ENCODE measurements at regions of chr15 and their contacts with region 1.

Region 1: GRCh38 chr15:90931737-90932659 is at the start of gene HDDC3:
- DNase-seq: peak; percentile 95
- ATAC-seq: peak; percentile 56
- H3K4me3 Mint-ChIP-seq: peak within 1 kb of the TSS; percentile 96
- H3K27ac Mint-ChIP-seq: peak within 1 kb of the TSS; percentile 97
- H3K4me1 Mint-ChIP-seq: peaks cover 53% of the 10 kb centered on the region
- H3K27me3 Mint-ChIP-seq: no peaks in the 10 kb centered on the region
- CTCF ChIP-seq: peak; percentile 85
- total RNA-seq, gene HDDC3: 17.6 and 19.0 TPM in 2 replicates

Region 2: GRCh38 chr15:90101969-90102890 is 829.8 kb before region 1 on chr15 and contains the start of gene IDH2:
- CTCF ChIA-PET with region 1: no interaction called
- POLR2A ChIA-PET with region 1: no interaction called
- intact Hi-C with region 1: loop called (anchors 5 kb)
- DNase-seq: peak; percentile 78
- ATAC-seq: peak; percentile 88
- H3K4me3 Mint-ChIP-seq: peak within 1 kb of the TSS; percentile 89
- H3K27ac Mint-ChIP-seq: peak within 1 kb of the TSS; percentile 83
- H3K4me1 Mint-ChIP-seq: peaks cover 50% of the 10 kb centered on the region
- H3K27me3 Mint-ChIP-seq: peaks cover 9% of the 10 kb centered on the region
- CTCF ChIP-seq: no peak
- total RNA-seq, gene IDH2: 49.1 and 51.2 TPM in 2 replicates

Region 3: DNA sequence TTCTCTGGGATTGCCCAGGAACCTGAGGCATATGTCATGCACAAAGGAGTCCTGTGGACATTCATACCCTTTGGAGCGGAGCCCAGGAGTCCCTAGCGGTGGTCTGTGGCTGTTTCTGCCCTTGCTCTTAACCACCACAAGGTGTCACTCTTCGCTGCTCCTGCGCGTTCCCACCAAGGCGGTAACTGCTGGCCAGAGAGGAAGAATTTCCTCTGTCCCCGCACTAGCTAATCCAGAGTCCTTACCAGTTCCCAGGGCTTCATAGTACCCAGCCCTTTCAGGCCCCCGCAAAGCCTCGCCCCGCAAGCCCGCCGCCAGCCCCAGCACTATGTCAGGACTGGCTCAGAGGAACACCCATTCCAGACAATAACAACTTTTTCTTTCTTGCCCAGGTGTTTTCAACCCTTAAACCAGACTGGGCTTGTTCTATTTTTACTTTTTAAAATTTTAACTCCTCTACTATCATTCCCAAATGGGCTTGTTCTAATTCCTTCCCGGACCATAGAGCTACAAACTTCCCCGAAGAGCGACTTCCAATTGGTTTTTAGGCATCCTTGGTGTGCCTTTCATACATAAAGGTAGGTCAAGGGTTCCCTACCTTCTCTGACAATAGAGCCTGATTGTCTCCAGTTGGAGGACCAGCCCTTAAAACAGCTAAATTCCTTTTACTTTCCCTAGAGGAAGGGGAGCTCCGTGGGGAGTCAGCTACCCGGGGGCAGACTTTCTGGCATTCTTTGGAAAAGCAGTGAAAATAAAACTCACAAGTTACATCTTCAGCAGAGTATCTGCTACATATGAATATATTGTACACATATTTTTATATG is 611.7 kb before region 1 on chr15:
- CTCF ChIA-PET with region 1: interaction called, 5 read pairs
- POLR2A ChIA-PET with region 1: no interaction called
- intact Hi-C with region 1: loop called (anchors 2 kb)
- DNase-seq: peak; percentile 42
- ATAC-seq: peak; percentile 100
- H3K4me3 Mint-ChIP-seq: peak overlapping the region; percentile 5
- H3K27ac Mint-ChIP-seq: no peak overlapping the region
- H3K4me1 Mint-ChIP-seq: peaks cover 2% of the 10 kb centered on the region
- H3K27me3 Mint-ChIP-seq: no peaks in the 10 kb centered on the region
- CTCF ChIP-seq: no peak

Region 4: DNA sequence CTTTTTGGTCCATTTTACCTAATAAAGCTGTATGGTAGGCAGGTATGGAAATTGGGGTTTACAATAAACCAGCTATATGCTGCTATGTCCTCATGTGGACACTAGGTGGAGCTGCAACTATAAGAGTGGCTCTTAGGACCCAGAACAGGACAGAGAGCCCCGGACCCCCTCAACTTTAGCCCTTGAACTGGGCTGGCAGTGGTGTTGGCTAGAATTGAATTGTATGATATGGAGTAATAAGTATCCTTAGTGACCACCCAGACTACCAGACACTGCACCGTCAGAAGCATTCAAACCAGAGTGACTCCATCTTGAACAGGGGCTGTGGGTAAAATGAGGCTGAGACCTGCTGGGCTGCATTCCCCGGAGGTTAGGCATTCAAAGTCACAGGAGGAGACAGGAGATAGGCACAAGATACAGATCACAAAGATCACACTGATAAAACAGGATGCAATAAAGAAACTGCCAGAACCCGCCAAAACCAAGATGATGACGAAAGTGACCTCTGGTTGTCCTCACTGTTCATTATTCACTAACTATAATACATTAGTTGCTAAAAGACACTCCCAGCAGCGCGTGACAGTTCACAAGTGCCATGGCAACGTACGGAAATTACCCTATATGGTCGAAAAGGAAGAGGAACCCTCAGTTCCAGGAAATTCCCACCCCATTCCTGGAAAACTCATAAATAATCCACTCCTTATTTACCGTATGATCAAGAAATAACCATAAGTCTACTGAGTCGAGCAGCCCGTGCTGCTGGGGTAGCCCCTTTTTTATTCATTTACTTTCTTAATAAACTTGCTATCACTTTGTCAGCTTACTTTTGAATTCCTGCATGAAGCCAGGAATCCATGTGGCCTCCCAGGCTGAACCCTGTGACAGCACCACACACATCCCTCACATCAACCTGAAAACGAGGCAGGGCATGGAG is 283.6 kb before region 1 on chr15:
- CTCF ChIA-PET with region 1: interaction called, 17 read pairs
- POLR2A ChIA-PET with region 1: interaction called, 6 read pairs
- intact Hi-C with region 1: loop called (anchors 1 kb)
- DNase-seq: no peak
- ATAC-seq: peak; percentile 93
- H3K4me3 Mint-ChIP-seq: peak overlapping the region; percentile 39
- H3K27ac Mint-ChIP-seq: peak overlapping the region; percentile 43
- H3K4me1 Mint-ChIP-seq: peaks cover 7% of the 10 kb centered on the region
- H3K27me3 Mint-ChIP-seq: peaks cover 4% of the 10 kb centered on the region
- CTCF ChIP-seq: no peak

Region 5: DNA sequence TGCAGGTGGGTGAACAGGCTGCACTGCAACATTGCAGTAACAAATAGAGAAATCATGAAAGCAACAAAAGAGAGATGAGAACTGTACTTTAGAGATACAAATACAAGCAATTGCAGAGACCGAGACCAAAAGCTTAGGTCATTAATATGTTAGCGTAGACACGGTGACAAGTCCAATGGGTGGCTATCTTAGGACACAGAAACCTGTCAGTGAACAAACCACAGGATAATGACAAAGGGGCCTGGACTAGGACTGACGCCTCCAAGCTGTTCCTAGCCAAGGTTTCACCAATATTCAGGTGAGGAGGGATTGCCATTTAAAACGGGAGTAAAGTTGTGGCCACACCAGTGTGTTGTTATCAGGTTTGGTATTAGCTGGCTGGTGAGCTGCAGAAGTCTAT is 256.5 kb before region 1 on chr15:
- CTCF ChIA-PET with region 1: no interaction called
- POLR2A ChIA-PET with region 1: no interaction called
- intact Hi-C with region 1: no loop called
- DNase-seq: no peak
- ATAC-seq: no peak
- H3K4me3 Mint-ChIP-seq: no peak overlapping the region
- H3K27ac Mint-ChIP-seq: no peak overlapping the region
- H3K4me1 Mint-ChIP-seq: peaks cover 12% of the 10 kb centered on the region
- H3K27me3 Mint-ChIP-seq: peaks cover 4% of the 10 kb centered on the region
- CTCF ChIP-seq: no peak

Region 6: GRCh38 chr15:90716976-90717821 is 214.8 kb before region 1 on chr15 and contains the start of gene BLM:
- CTCF ChIA-PET with region 1: interaction called, 4 read pairs
- POLR2A ChIA-PET with region 1: interaction called, 10 read pairs
- intact Hi-C with region 1: loop called (anchors 1 kb)
- DNase-seq: peak; percentile 87
- ATAC-seq: peak; percentile 99
- H3K4me3 Mint-ChIP-seq: peak within 1 kb of the TSS; percentile 96
- H3K27ac Mint-ChIP-seq: peak within 1 kb of the TSS; percentile 94
- H3K4me1 Mint-ChIP-seq: peaks cover 30% of the 10 kb centered on the region
- H3K27me3 Mint-ChIP-seq: no peaks in the 10 kb centered on the region
- CTCF ChIP-seq: no peak
- total RNA-seq, gene BLM: 18.2 and 23.4 TPM in 2 replicates

Region 7: DNA sequence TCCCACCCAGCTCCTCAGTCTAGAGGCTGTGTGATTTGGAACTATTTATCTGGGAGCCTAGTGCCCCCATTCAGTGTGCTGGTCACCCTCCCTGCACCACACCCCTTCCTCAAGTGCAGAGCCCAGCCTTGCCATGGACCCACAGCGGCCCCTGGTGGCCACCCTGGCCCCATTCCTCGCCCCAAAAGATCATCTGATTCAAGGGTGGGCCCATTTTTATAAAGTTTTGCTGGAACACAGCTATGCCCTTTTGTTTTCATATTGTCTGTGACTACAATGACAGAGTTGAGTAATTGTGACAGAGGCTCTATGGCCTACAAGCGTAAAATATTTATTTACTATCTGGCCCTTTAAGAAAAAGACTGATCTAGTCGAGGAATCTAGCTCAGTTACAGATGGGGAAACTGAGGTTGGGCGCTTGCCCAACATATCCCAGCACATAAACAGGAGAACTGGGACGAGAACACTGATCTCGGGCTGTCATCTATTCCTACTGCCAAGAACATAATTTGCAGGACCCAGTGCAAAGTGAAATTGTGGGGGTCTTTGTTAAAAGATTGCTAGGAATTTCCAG is 45.9 kb before region 1 on chr15:
- CTCF ChIA-PET with region 1: interaction called, 55 read pairs
- POLR2A ChIA-PET with region 1: interaction called, 35 read pairs
- intact Hi-C with region 1: no loop called
- DNase-seq: peak; percentile 78
- ATAC-seq: peak; percentile 69
- H3K4me3 Mint-ChIP-seq: peak overlapping the region; percentile 71
- H3K27ac Mint-ChIP-seq: peak overlapping the region; percentile 76
- H3K4me1 Mint-ChIP-seq: peaks cover 34% of the 10 kb centered on the region
- H3K27me3 Mint-ChIP-seq: no peaks in the 10 kb centered on the region
- CTCF ChIP-seq: peak; percentile 90

Region 8: DNA sequence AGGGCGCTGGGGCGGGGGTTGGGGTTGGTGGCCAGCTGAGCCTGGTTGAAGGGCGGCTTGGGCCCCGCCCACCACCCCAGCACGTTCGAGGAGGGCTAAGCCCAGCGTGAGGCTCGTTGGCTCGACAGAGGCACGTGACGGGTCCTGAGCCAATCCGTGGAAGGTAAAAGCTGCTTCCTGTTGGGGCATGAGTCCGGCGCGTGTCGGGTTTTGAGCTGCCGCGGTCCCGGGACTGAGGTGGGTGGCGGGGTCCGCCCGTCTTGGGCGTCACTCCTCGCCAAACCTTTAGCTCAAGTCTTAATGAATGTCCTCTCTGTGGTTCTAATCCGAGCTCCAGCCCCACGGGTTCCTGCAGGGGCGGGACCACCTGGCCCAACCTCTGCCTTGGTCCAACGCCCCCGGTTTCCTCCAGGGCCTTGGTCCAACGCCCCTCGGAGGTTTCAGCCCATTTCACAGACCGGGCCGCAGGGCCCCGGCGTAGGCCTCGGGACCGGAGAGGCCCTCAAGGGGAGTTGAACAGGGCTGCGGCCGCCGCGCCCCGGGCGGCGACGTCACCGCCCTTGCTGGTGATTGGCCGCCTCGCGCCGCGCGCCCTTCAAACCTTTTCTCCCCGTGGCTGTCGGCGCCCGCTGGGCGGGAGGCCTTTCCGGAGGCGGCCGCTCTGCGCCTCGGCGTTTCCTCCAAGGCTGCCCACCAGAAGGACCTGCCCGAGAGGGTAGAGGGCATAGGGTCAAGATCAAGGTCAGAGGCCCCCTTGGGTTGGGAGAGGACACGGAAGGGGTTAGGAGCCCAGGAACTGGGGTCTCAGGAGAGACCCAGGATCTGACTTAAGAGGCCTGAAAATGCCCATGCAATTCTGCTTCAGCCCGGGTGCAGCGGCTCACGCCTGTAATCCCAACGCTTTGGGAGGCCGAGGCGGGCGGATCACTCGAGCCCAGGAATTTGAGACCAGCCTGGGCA is 23.0 kb after region 1 on chr15 and contains the start of gene RCCD1:
- CTCF ChIA-PET with region 1: interaction called, 23 read pairs
- POLR2A ChIA-PET with region 1: interaction called, 26 read pairs
- intact Hi-C with region 1: loop called (anchors 1 kb)
- DNase-seq: peak; percentile 83
- ATAC-seq: peak; percentile 94
- H3K4me3 Mint-ChIP-seq: peak within 1 kb of the TSS; percentile 88
- H3K27ac Mint-ChIP-seq: peak within 1 kb of the TSS; percentile 92
- H3K4me1 Mint-ChIP-seq: peaks cover 21% of the 10 kb centered on the region
- H3K27me3 Mint-ChIP-seq: no peaks in the 10 kb centered on the region
- CTCF ChIP-seq: no peak
- total RNA-seq, gene RCCD1: 15.7 and 19.3 TPM in 2 replicates

Measured in activated B cell treated with CpG ODN at 0.5 μM for 24 hours (primary cell).